Heart right ventricle (tissue), 16 donors: ENCODE measurements at regions of chr2 and their contacts with region 1.

Region 1: DNA sequence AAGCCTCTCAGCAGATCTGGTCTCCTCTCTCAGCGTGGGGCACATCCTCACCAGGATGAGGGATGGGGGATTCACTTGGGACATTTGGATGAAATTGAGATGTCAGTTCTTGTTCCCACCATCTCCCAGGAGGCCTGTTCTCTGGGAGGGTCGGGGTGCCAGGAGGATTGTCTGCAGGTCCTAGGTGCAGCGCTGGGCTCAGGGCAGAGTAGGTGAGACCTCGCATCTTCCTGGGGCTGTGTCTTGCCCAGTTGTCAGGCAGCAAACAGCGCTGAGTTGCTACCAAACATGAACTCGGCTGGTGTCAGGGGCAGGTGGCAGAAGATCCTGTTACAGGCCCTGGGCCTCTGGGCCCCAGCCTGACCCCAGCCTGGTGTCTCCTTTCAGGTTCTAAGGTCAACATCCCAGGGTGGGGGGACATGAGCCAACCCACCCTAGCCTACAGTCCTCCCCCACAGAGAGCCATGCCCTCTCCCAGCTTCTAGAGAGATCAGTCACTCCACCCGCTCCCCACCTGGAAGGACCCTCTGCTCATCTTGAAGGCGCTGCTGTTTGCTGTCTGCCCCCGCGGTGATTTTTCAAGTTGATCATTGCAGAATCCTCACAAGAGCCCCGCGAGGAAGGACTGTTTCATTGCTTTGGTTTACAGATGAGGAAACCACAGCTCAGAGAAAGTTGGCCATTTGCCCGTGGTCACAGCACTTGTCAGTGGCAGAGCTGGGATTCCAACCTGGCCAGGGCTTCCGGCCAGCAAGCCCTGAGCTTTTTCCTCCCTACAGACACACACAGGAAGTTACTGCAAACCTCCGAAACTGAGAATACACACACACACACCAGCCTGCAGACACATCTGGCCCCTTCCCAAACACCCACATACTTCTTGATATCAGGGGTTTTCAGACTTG is 83.9 kb downstream of the STPG4 start:
- DNase-seq: peak; percentile 71 to 85
- ATAC-seq: peak in 7 of 8 donors; percentile 23 to 59 (median 40)
- H3K4me3 ChIP-seq: no peak overlapping the region
- H3K27ac ChIP-seq: peak overlapping the region; percentile 76 to 96 (median 92)
- H3K4me1 ChIP-seq: peaks cover 40 to 94% (median 79%) of the 10 kb centered on the region in 9 donors
- H3K27me3 ChIP-seq: no peaks in the 10 kb centered on the region
- CTCF ChIP-seq: no peak

Region 2: DNA sequence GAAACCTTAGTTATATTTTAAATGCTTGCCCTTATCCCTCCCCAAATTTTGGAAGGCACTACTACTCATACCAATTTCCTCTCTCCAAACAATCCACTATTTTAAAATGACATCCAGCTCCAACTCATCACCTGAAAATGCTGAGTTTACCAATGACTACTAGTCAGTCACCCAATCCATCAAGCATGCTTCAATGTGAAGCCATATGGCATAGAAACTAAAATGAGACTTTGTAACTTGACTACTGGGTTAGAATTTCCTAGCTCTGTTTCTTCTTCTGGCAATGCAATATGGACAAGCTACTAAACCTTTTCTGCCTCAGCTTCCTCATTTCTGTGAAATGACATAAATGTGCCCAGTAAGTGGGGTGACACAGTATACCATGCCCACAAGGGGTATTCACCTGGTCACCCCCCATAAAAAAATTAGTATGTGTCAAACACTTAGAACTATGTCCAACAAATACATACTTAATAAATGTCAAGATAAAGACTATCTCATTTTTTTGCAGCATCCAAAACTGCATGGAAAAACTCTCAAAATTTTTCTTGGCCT is 93.9 kb after region 1 on chr2:
- intact Hi-C with region 1: loop called in 1 of 10 experiments (anchors 10 kb)
- DNase-seq: no peak
- ATAC-seq: no peak
- H3K4me3 ChIP-seq: no peak overlapping the region
- H3K27ac ChIP-seq: no peak overlapping the region
- H3K4me1 ChIP-seq: peaks cover 0 to 83% (median 58%) of the 10 kb centered on the region in 9 donors
- H3K27me3 ChIP-seq: no peaks in the 10 kb centered on the region
- CTCF ChIP-seq: no peak